Activated T-helper 1 cell treated with anti-CD3 and anti-CD28 coated beads, Interleukin-12 subunit alpha, Interleukin-12 subunit beta, Interleukin-2, Interleukin-4 antibody, amounts not matched to agents 30 ng/mL and 10 ng/mL and 1 ng/mL, durations not matched to agents 14 hours and 24 hours and 36 hours (primary cell): ENCODE measurements at regions of chr2 and their contacts with region 1.

Region 1: GRCh38 chr2:199916980-199917379 is 5.9 kb downstream of the C2orf69 start:
- DNase-seq: no peak
- H3K4me3 Mint-ChIP-seq: no peak overlapping the region
- H3K27ac Mint-ChIP-seq: no peak overlapping the region
- H3K4me1 Mint-ChIP-seq: peaks cover 22% of the 10 kb centered on the region
- H3K27me3 Mint-ChIP-seq: no peaks in the 10 kb centered on the region

Region 2: DNA sequence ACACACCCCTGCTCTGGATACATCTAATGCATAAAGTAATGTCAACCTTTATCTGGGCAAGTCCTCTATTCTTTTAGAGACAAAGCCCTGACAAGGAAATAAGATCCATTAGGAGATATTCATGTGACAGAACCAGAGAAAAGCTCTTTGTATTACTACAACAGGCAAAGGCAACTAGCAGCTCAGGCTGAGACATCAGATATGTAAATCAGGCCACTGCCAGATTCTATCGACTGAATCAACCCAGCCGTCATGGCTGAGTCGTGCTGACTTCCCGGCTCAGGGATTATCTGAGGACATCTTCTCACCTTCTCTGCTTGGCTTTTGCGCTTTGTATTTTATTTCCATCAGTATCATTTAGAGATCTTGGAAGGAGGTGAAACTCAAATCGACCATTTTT is 1818.1 kb before region 1 on chr2:
- intact Hi-C with region 1: no loop called
- DNase-seq: no peak
- H3K4me3 Mint-ChIP-seq: no peak overlapping the region
- H3K27ac Mint-ChIP-seq: no peak overlapping the region
- H3K4me1 Mint-ChIP-seq: no peaks in the 10 kb centered on the region
- H3K27me3 Mint-ChIP-seq: no peaks in the 10 kb centered on the region

Region 3: DNA sequence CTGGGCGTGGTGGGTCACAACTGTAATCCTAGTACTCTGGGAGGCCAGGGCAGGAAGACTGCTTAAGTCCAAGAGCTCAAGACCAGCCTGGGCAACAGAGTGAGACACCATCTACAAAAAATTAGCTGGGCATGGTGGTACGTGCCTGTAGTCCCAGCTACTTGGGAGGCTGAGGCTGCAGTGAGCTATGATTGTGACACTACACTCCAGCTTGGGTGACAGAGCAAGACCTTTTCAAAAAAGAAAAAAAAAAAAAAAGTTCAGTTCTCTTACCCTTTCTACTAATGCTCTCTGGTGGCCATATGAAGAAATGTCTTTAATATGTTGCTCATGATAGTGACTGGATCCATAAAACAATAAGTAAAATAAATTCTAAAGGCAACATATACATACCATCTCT is 23.4 kb after region 1 on chr2:
- intact Hi-C with region 1: loop called (anchors 1 kb)
- DNase-seq: no peak
- H3K4me3 Mint-ChIP-seq: no peak overlapping the region
- H3K27ac Mint-ChIP-seq: no peak overlapping the region
- H3K4me1 Mint-ChIP-seq: peaks cover 24% of the 10 kb centered on the region
- H3K27me3 Mint-ChIP-seq: no peaks in the 10 kb centered on the region